ENCODE measurements at regions of chr5 and their contacts with region 1.

Region 1: DNA sequence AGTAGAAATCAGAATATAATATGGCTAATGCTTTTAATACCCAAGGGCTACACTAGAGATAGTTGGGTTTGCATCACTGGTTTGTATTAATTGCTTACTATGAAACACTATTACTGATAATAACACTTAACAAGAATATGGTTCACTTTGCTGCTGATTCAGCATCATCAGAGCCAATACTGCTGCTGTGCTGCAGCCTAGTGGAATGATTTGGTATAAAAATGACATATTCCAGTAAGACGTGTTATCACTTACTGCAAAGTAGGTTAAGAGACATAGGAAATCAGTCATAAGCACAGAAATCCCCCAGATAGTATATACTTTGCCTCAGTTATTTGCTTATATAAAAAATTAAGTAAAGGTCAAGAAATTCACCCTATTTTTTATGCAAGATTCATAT is 2.8 kb downstream of the CDH10 start:
- DNase-seq: no peak
- ATAC-seq: no peak
- H3K4me3 ChIP-seq: no peak overlapping the region
- H3K27ac ChIP-seq: no peak overlapping the region
- H3K4me1 ChIP-seq: peaks cover 0 to 7% (median 0%) of the 10 kb centered on the region in 12 donors
- H3K27me3 ChIP-seq: peaks cover 0 to 22% (median 0%) of the 10 kb centered on the region in 9 donors
- CTCF ChIP-seq: peak in 9 of 12 donors; percentile 13 to 54 (median 40)
- POLR2A ChIP-seq: no peak

Region 2: GRCh38 chr5:24232929-24233498 is 409.0 kb before region 1 on chr5:
- intact Hi-C with region 1: loop called in 1 of 10 experiments (anchors 10 kb)
- DNase-seq: no peak
- ATAC-seq: no peak
- H3K4me3 ChIP-seq: no peak overlapping the region
- H3K27ac ChIP-seq: no peak overlapping the region
- H3K4me1 ChIP-seq: no peaks in the 10 kb centered on the region
- H3K27me3 ChIP-seq: no peaks in the 10 kb centered on the region
- CTCF ChIP-seq: peak in 4 of 12 donors; percentile 19 to 28 (median 24)
- POLR2A ChIP-seq: no peak

Region 3: DNA sequence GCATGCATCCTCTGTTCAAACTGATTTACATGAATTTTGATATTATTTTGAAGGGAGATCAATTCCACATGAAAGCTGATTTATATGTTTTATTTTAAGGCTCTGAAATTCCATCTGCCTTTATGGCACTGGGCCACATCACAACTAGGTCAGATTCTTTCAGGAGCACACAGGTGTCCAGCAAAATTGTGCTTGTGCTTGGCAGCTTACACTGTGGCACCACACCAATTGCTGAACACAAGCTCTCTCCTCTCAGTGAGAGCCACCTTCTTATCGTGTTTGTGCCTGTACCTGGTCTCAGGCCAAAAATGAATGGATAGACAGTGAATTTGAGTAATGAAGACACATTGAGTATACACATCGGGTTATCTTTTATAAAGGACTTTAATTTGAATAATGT is 197.6 kb before region 1 on chr5:
- intact Hi-C with region 1: loop called in 7 of 10 experiments (anchors 5 to 10 kb)
- DNase-seq: peak in 1 of 5 donors; percentile 26
- ATAC-seq: peak; percentile 46 to 80 (median 69)
- H3K4me3 ChIP-seq: no peak overlapping the region
- H3K27ac ChIP-seq: no peak overlapping the region
- H3K4me1 ChIP-seq: no peaks in the 10 kb centered on the region
- H3K27me3 ChIP-seq: no peaks in the 10 kb centered on the region
- CTCF ChIP-seq: no peak
- POLR2A ChIP-seq: no peak

Region 4: GRCh38 chr5:24720743-24721142 is 78.7 kb after region 1 on chr5:
- intact Hi-C with region 1: no loop called
- DNase-seq: no peak
- ATAC-seq: no peak
- H3K4me3 ChIP-seq: no peak overlapping the region
- H3K27ac ChIP-seq: no peak overlapping the region
- H3K4me1 ChIP-seq: no peaks in the 10 kb centered on the region
- H3K27me3 ChIP-seq: no peaks in the 10 kb centered on the region
- CTCF ChIP-seq: no peak
- POLR2A ChIP-seq: no peak